ENCODE measurements at regions of chr5 and their contacts with region 1.

Region 1: DNA sequence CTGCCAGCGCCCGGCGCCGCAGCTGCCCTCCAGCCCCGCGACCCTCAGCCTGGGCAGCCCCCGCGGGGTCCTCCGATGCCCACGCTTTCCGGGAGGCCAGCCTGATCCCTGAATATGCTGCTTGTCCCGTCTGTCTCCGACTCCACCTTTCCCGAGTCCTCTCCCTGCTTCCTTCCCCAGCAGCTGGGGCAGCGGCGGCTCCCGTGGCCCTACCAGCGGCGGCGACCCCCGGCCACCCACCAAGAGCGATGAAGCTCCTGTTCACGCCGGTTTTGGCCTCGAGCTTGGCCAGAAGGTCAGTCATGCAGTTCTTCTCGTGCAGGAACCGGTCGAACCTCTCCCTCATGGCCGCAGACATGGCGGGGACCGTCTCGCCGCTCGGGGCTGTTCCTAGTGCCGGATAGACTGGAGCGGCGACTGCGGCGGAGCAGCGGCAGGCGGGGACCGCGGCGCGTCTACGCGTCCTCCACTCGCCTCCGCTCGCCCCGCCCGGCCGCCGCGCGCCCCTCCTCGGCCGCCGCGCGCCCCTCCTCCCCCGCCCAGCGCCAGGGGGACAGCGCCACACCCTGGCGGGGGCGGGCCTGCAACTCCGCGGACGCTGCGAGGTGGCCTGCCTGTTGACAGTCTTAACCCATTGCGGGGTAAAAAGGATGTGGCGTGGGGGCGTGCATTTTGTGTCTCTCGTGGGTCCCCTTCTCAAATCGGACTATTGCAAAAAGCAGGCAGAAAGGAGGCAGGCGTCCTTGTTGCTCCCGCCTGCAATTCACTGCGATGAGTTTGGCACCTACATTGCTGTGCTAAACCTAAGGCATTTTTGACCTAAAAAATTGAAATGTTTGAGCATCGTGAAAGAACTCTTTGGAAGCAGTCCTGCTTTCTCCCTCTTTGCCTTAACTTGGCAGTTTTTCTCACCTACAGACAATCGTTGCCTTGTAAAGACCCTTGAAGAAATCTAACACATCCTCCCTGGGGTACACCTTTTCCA is at the start of gene REEP5:
- DNase-seq: peak; percentile 62 to 89 (median 80)
- H3K4me3 ChIP-seq: peak within 1 kb of the TSS; percentile 41 to 100 (median 94)
- H3K27ac ChIP-seq: peak within 1 kb of the TSS; percentile 83 to 99 (median 96)
- H3K27me3 ChIP-seq: no peaks in the 10 kb centered on the region
- CTCF ChIP-seq: peak; percentile 21 to 95 (median 76)
- total RNA-seq, gene REEP5: 87.5 to 287 (median 217) TPM

Region 2: DNA sequence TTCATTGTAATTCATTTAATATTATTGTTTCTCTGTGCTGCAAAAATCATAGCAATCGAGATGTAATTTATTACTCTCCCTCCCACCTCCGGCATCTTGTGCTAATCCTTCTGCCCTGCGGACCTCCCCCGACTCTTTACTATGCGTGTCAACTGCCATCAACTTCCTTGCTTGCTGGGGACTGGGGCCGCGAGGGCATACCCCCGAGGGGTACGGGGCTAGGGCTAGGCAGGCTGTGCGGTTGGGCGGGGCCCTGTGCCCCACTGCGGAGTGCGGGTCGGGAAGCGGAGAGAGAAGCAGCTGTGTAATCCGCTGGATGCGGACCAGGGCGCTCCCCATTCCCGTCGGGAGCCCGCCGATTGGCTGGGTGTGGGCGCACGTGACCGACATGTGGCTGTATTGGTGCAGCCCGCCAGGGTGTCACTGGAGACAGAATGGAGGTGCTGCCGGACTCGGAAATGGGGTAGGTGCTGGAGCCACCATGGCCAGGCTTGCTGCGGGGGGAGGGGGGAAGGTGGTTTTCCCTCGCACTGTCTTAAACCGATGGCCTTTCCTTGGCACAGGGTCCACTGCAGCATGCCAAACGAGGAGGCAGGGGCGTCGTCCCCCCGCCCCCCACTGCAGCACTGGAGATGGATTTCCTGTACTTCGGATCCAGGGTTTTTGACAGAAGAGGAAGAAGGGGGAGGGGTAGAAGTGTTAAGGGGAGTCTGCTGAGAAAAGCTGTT is 184.5 kb before region 1 on chr5 and contains the start of gene APC:
- intact Hi-C with region 1: loop called in 1 of 2 experiments (anchors 10 kb)
- DNase-seq: peak; percentile 95 to 99 (median 99)
- H3K4me3 ChIP-seq: peak within 1 kb of the TSS; percentile 50 to 95 (median 75)
- H3K27ac ChIP-seq: peak within 1 kb of the TSS; percentile 53 to 97 (median 90)
- H3K27me3 ChIP-seq: no peaks in the 10 kb centered on the region
- CTCF ChIP-seq: peak in 22 of 56 donors; percentile 3 to 47 (median 15)
- total RNA-seq, gene APC: 149 to 320 (median 208) TPM

Region 3: DNA sequence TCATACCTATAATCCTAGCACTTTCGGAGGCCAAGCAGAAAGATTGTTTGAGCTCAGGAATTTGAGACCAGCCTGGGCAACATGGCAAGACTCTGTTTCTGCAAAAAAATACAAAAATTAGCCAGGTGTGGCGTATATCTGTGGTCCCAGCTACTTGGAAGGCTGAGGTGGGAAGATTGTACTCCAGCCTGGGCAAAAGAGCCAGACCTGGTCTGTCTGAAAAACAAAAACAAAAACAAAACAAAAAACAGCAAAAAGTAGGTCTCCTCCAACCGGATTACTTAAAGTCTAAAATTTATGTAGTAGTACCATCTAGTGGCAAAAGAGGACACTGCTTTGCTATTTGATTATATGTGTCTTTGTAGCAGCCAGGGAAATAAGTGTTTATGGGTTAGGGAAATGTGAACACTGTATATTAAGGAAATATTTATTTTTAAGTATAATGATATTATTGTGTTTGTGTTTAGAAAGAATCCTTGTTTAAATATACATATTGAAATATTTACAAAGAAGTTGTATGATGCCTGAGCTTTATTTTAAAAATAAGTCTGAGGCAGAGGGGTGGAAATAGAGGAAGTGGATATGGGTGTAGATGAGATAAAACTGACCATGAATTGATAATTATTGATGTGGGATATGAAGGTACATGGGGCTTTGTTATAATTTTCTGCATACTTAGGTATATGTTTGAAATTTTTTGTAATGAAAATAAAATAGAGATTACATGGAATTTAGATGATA is 164.5 kb before region 1 on chr5:
- intact Hi-C with region 1: loop called in 1 of 2 experiments (anchors 5 kb)
- DNase-seq: no peak
- H3K4me3 ChIP-seq: peak overlapping the region in 14 of 59 donors; percentile 2 to 44 (median 28)
- H3K27ac ChIP-seq: peak overlapping the region in 54 of 59 donors; percentile 1 to 79 (median 50)
- H3K27me3 ChIP-seq: no peaks in the 10 kb centered on the region
- CTCF ChIP-seq: peak; percentile 70 to 97 (median 88)

Region 4: DNA sequence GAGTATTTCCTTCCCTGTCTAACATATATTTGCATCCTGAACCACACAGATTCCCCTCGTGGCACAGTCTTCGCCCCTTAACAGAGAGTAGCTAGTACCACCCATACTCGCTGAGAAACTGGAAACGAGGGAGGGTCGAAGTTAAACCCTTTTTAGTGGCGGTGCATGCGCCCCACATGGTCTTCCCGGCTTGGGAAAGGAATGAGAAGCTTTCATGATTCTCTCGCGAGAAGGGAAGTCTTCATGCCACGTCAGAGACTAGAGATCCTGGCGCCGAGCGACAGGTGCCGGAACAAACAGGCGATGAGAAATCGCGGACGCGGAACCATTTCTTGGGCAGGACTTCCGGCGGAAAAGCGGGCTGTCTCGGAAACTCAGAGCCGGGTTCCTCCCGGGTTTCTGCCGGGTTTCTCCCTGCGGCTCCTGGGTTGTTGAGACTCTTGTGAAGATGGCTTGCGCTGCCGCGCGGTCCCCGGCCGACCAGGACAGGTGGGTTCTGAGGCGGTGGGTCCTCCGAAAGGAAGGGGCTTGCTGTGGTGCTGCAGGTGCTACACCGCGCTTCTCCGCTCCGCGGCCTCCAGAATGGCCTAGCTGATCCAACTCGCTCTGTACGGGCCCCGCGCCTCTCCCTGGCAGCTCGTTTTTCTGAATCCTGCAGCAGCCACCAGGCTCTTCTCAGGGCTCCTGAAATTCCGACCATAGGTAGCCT is 61.0 kb before region 1 on chr5 and contains the start of gene SRP19:
- intact Hi-C with region 1: loop called in 1 of 2 experiments (anchors 2 kb)
- DNase-seq: peak; percentile 88 to 97 (median 95)
- H3K4me3 ChIP-seq: peak within 1 kb of the TSS; percentile 75 to 100 (median 93)
- H3K27ac ChIP-seq: peak within 1 kb of the TSS in 58 of 59 donors; percentile 14 to 92 (median 78)
- H3K27me3 ChIP-seq: no peaks in the 10 kb centered on the region
- CTCF ChIP-seq: peak in 34 of 56 donors; percentile 8 to 61 (median 28)
- total RNA-seq, gene SRP19: 17.9 to 55.3 (median 37.1) TPM

Region 5: DNA sequence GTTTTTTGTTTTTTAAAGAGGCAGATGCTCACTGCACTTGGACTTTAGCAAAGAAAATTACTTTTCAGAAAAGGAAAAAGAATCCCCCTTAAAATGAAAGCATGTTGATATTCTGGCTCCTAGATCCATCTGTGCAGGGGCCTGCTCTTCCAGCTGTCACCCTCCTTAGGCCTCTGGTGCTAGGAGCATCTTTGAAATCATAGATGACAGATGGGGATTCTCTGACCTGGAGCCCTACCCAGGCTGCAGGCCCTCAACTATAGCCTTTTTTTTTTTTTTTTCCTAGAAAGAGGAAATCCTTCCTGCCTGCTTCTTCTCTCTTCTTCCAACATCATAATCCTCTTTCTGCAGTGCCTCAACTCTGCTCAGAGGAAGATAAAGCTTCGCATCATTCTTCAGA is 38.2 kb after region 1 on chr5:
- intact Hi-C with region 1: loop called (anchors 5 kb)
- DNase-seq: no peak
- H3K4me3 ChIP-seq: no peak overlapping the region
- H3K27ac ChIP-seq: no peak overlapping the region
- H3K27me3 ChIP-seq: no peaks in the 10 kb centered on the region
- CTCF ChIP-seq: no peak

Region 6: GRCh38 chr5:112976432-112977309 is 54.5 kb after region 1 on chr5 and contains the start of gene DCP2:
- intact Hi-C with region 1: loop called (anchors 1 to 2 kb)
- DNase-seq: peak; percentile 81 to 94 (median 93)
- H3K4me3 ChIP-seq: peak within 1 kb of the TSS; percentile 67 to 98 (median 88)
- H3K27ac ChIP-seq: peak within 1 kb of the TSS; percentile 54 to 96 (median 87)
- H3K27me3 ChIP-seq: no peaks in the 10 kb centered on the region
- CTCF ChIP-seq: peak in 24 of 56 donors; percentile 7 to 42 (median 16)
- total RNA-seq, gene DCP2: 38.5 to 94.6 (median 64.7) TPM

Measured in dorsolateral prefrontal cortex (tissue), 120 donors.